Naive thymus-derived CD4-positive, alpha-beta T cell (primary cell): ENCODE measurements at regions of chr1 and their contacts with region 1.

Region 1: GRCh38 chr1:197180252-197180878 is 33.9 kb upstream of the ASPM start:
- DNase-seq: peak in 5 of 9 donors; percentile 24 to 45 (median 30)
- ATAC-seq: peak; percentile 70
- H3K4me3 ChIP-seq: no peak overlapping the region
- H3K4me3 Mint-ChIP-seq: no peak overlapping the region
- H3K27ac ChIP-seq: no peak overlapping the region
- H3K27ac Mint-ChIP-seq: no peak overlapping the region
- H3K4me1 ChIP-seq: no peaks in the 10 kb centered on the region
- H3K4me1 Mint-ChIP-seq: peaks cover 2 to 8% (median 3%) of the 10 kb centered on the region in 7 donors
- H3K27me3 ChIP-seq: no peaks in the 10 kb centered on the region
- H3K27me3 Mint-ChIP-seq: no peaks in the 10 kb centered on the region

Region 2: GRCh38 chr1:197224160-197224559 is 43.8 kb after region 1 on chr1:
- CTCF ChIA-PET with region 1: no interaction called
- POLR2A ChIA-PET with region 1: no interaction called
- intact Hi-C with region 1: loop called in 1 of 2 experiments (anchors 2 kb)
- DNase-seq: no peak
- ATAC-seq: no peak
- H3K4me3 ChIP-seq: no peak overlapping the region
- H3K4me3 Mint-ChIP-seq: no peak overlapping the region
- H3K27ac ChIP-seq: no peak overlapping the region
- H3K27ac Mint-ChIP-seq: no peak overlapping the region
- H3K4me1 ChIP-seq: no peaks in the 10 kb centered on the region
- H3K4me1 Mint-ChIP-seq: peaks cover 0 to 8% (median 0%) of the 10 kb centered on the region in 7 donors
- H3K27me3 ChIP-seq: no peaks in the 10 kb centered on the region
- H3K27me3 Mint-ChIP-seq: no peaks in the 10 kb centered on the region

Region 3: DNA sequence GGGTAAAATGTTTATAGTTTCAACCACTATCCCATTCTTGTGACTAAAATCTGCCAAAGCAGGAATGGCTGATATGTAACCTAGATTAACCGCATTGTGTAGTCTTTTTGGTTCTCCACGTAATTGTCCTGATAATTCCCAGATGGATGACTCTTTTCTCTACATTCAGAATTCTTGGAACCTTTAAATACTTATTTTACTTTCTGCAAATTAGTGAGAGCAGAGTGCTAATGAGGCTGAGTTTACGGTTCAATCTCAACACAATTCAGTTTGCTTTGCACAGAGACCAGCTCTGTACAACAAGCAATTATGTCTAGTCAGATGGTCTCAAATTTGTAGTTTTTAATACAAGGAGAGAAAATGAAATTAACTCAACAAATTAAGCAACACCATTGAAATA is 96.8 kb after region 1 on chr1:
- CTCF ChIA-PET with region 1: no interaction called
- POLR2A ChIA-PET with region 1: no interaction called
- intact Hi-C with region 1: loop called in 1 of 2 experiments (anchors 5 kb)
- DNase-seq: no peak
- ATAC-seq: no peak
- H3K4me3 ChIP-seq: no peak overlapping the region
- H3K4me3 Mint-ChIP-seq: no peak overlapping the region
- H3K27ac ChIP-seq: no peak overlapping the region
- H3K27ac Mint-ChIP-seq: no peak overlapping the region
- H3K4me1 ChIP-seq: no peaks in the 10 kb centered on the region
- H3K4me1 Mint-ChIP-seq: no peaks in the 10 kb centered on the region
- H3K27me3 ChIP-seq: no peaks in the 10 kb centered on the region
- H3K27me3 Mint-ChIP-seq: peaks cover 3 to 9% (median 7%) of the 10 kb centered on the region in 5 donors

Region 4: DNA sequence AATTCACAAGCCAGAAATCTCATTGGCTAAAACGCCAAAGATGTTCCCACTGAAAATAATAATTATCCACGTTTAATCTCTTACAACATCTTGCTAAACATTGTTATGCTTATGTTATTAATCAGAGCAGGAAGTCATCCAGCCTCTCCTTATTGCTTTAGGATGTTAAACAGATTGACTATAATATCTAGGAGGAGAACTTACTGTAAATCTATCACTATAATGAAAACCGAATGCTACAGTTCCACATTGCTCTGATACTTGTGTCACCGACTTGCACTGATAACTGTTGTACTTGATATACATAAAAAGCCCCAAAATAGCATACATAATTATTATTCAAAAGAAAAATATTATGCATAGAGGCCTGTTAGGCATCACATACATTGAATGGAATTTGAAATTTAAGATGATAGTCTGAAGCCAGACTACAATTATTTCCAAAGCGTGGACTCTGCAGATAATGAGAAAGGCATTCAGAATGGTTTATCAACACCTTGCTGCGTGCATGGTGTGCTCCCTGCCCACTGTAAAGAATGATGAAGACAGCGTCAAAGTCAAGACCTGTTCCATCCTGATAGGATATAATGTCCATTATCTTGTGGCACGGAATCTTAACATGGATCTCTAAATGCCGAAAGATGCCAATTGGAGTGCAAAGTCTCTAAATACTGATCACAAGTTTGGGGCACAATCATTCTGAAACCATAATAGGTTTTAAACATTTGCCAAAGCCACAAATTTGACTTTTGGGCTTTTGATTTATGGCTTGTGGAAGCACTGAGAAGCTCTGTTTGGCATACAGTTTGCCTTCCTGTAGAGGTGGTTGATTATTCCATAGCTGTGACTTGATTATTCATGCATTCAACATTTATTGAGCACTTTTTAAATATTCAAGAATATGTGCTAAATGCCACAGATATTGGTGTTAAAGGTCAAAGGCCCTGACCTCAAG is 159.0 kb after region 1 on chr1:
- CTCF ChIA-PET with region 1: no interaction called
- POLR2A ChIA-PET with region 1: no interaction called
- intact Hi-C with region 1: loop called (anchors 2 to 5 kb)
- DNase-seq: no peak
- ATAC-seq: no peak
- H3K4me3 ChIP-seq: no peak overlapping the region
- H3K4me3 Mint-ChIP-seq: no peak overlapping the region
- H3K27ac ChIP-seq: no peak overlapping the region
- H3K27ac Mint-ChIP-seq: no peak overlapping the region
- H3K4me1 ChIP-seq: no peaks in the 10 kb centered on the region
- H3K4me1 Mint-ChIP-seq: peaks cover 0 to 12% (median 5%) of the 10 kb centered on the region in 7 donors
- H3K27me3 ChIP-seq: no peaks in the 10 kb centered on the region
- H3K27me3 Mint-ChIP-seq: peaks cover 0 to 11% (median 0%) of the 10 kb centered on the region in 5 donors

Region 5: DNA sequence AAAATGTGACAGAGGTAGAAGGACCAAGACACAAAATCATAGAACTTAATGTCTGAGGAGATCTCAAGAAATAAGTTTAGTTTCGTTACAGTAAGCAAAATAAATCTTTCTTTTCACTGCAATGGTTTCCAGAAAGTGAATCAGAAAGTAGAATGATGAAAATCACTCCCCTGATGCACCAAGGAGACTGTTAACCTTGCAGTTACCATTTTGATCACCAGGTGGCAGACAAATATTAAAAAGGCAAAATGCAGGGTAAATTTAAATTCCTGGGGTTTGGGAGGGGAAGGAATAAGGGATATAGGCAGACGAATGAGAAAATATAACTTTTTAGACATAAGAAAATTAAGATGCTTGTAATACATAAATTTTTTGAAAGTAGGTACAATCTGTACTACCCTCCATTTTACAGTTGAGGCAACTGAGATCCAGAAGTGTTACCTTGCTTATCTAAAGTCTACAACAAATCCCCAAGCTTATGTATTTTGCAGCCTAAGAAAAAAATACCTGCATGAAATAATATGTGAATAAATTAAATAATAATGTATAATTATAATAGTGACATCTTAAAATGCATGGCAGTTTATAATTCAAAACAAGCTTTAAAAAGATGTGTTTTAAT is 340.9 kb after region 1 on chr1:
- CTCF ChIA-PET with region 1: no interaction called
- POLR2A ChIA-PET with region 1: no interaction called
- intact Hi-C with region 1: loop called (anchors 1 to 10 kb)
- DNase-seq: peak in 7 of 9 donors; percentile 2 to 34 (median 24)
- ATAC-seq: no peak
- H3K4me3 ChIP-seq: no peak overlapping the region
- H3K4me3 Mint-ChIP-seq: no peak overlapping the region
- H3K27ac ChIP-seq: no peak overlapping the region
- H3K27ac Mint-ChIP-seq: no peak overlapping the region
- H3K4me1 ChIP-seq: no peaks in the 10 kb centered on the region
- H3K4me1 Mint-ChIP-seq: peaks cover 0 to 5% (median 0%) of the 10 kb centered on the region in 7 donors
- H3K27me3 ChIP-seq: no peaks in the 10 kb centered on the region
- H3K27me3 Mint-ChIP-seq: no peaks in the 10 kb centered on the region